Activated CD4-positive, alpha-beta memory T cell treated with anti-CD3 and anti-CD28 coated beads, Interleukin-2, amount 10 ng/mL, durations not matched to agents 7 days and 5 days (primary cell): ENCODE measurements at regions of chr3 and their contacts with region 1.

Region 1: GRCh38 chr3:37295925-37296324 is 121.5 kb upstream of the LRRFIP2 start:
- DNase-seq: no peak
- H3K4me3 Mint-ChIP-seq: no peak overlapping the region
- H3K27ac Mint-ChIP-seq: no peak overlapping the region
- H3K4me1 Mint-ChIP-seq: peaks cover 25% of the 10 kb centered on the region
- H3K27me3 Mint-ChIP-seq: no peaks in the 10 kb centered on the region

Region 2: GRCh38 chr3:37308247-37308646 is 12.3 kb after region 1 on chr3:
- CTCF ChIA-PET with region 1: interaction called, 10 read pairs
- POLR2A ChIA-PET with region 1: no interaction called
- DNase-seq: no peak
- H3K4me3 Mint-ChIP-seq: no peak overlapping the region
- H3K27ac Mint-ChIP-seq: no peak overlapping the region
- H3K4me1 Mint-ChIP-seq: peaks cover 8% of the 10 kb centered on the region
- H3K27me3 Mint-ChIP-seq: no peaks in the 10 kb centered on the region